Activated CD8-positive, alpha-beta memory T cell treated with anti-CD3 and anti-CD28 coated beads, Interleukin-2, amount 10 ng/mL, durations not matched to agents 7 days and 5 days (primary cell): ENCODE measurements at regions of chr15 and their contacts with region 1.

Region 1: GRCh38 chr15:90482124-90483011 is 47.4 kb upstream of the CRTC3 start:
- DNase-seq: peak; percentile 67
- ATAC-seq: peak; percentile 43
- H3K4me3 Mint-ChIP-seq: no peak overlapping the region
- H3K27ac Mint-ChIP-seq: no peak overlapping the region
- H3K4me1 Mint-ChIP-seq: peaks cover 47% of the 10 kb centered on the region
- H3K27me3 Mint-ChIP-seq: no peaks in the 10 kb centered on the region

Region 2: GRCh38 chr15:90291679-90292356 is 190.6 kb before region 1 on chr15:
- CTCF ChIA-PET with region 1: interaction called, 14 read pairs
- DNase-seq: peak; percentile 55
- ATAC-seq: no peak
- H3K4me3 Mint-ChIP-seq: no peak overlapping the region
- H3K27ac Mint-ChIP-seq: no peak overlapping the region
- H3K4me1 Mint-ChIP-seq: peaks cover 18% of the 10 kb centered on the region
- H3K27me3 Mint-ChIP-seq: peaks cover 10% of the 10 kb centered on the region

Region 3: GRCh38 chr15:90306560-90306959 is 175.8 kb before region 1 on chr15:
- CTCF ChIA-PET with region 1: interaction called, 16 read pairs
- DNase-seq: peak; percentile 74
- ATAC-seq: peak; percentile 96
- H3K4me3 Mint-ChIP-seq: peak overlapping the region; percentile 5
- H3K27ac Mint-ChIP-seq: peak overlapping the region; percentile 54
- H3K4me1 Mint-ChIP-seq: peaks cover 32% of the 10 kb centered on the region
- H3K27me3 Mint-ChIP-seq: peaks cover 9% of the 10 kb centered on the region

Region 4: DNA sequence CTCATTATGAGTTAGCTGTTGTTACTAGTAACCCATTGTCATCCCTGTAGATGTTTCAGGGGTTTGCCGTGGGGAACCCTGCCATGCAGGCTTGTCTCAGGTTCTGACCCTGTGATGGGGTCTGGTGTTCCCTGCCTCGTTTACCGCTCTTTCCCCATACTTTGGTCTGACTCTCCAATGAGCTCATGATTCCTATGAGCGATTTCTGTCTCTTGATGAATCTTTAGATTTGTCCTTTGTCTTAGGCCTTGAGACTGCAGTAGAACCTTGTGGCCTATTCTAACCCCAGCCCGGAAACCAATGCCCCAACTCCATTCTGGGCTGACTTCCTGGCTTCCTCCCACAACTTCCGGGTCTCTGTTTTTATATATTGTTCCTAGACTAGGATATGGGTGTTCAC is 105.6 kb before region 1 on chr15:
- CTCF ChIA-PET with region 1: interaction called, 15 read pairs
- DNase-seq: peak; percentile 93
- ATAC-seq: peak; percentile 92
- H3K4me3 Mint-ChIP-seq: peak overlapping the region; percentile 47
- H3K27ac Mint-ChIP-seq: peak overlapping the region; percentile 94
- H3K4me1 Mint-ChIP-seq: peaks cover 36% of the 10 kb centered on the region
- H3K27me3 Mint-ChIP-seq: no peaks in the 10 kb centered on the region

Region 5: GRCh38 chr15:90501898-90502297 is 19.5 kb after region 1 on chr15:
- CTCF ChIA-PET with region 1: interaction called, 11 read pairs
- DNase-seq: no peak
- ATAC-seq: no peak
- H3K4me3 Mint-ChIP-seq: no peak overlapping the region
- H3K27ac Mint-ChIP-seq: peak overlapping the region; percentile 16
- H3K4me1 Mint-ChIP-seq: peaks cover 2% of the 10 kb centered on the region
- H3K27me3 Mint-ChIP-seq: no peaks in the 10 kb centered on the region

Region 6: DNA sequence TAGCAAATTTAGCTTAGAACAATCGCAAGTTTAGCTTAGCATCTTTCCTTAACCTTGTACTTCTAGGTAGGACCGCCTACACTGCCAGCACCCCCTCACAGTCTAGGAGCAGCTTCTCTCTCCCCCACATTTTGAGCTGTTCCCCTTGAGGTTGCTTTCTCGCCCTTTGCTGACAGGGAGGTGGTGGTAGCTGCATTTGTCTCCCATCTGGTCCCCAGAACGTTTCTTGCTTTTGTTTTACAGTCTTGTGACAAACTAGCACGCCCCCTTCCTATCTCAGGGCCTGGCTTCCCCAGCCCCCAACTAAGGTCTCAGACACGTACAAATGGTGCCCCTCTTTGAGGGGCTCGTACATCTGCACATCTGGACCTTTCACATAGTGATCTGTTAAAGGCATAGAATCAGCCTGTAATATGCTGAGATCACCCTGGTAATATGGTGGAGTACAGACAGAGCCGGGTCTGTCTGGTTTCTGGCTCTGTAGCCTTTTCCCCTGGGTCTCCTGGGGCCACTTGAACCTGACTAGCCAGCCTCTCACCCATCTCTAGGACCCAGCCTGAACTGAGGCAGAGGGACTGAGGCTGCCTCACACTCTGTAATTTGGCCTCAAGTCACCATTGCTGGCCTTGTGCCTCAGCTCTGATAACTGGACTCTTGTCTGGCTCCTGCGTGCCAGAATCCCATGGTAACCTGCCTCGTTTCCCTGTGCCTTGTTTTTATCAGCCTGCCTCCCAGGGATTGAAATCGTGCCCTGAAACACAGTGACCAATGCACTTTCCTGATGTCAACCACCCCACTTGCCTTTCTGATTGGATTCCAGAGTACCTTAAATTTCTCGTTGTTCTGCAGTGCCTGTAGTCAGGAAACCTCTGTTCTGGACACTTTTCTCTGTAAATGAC is 75.1 kb after region 1 on chr15:
- CTCF ChIA-PET with region 1: no interaction called
- DNase-seq: no peak
- ATAC-seq: no peak
- H3K4me3 Mint-ChIP-seq: no peak overlapping the region
- H3K27ac Mint-ChIP-seq: no peak overlapping the region
- H3K4me1 Mint-ChIP-seq: peaks cover 58% of the 10 kb centered on the region
- H3K27me3 Mint-ChIP-seq: no peaks in the 10 kb centered on the region

Region 7: DNA sequence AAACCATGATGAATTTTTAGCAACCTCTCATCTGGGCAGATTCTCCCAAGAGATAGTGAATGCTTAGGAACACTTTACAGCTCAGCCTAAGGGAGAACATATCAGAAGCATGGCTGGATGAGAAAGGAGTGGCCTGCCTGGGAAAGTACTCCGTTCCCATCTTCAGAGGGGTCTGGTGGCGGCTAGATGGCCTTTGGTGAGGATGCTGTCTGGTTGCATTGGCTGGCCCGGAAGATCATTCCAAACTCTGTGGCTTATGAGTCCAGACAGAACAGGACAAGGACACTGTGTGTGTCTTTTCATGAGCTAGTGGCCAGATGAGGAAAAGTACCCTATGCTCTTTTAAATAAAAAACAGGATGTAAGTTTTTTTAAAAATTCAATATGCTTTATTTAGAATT is 98.6 kb after region 1 on chr15:
- CTCF ChIA-PET with region 1: no interaction called
- DNase-seq: no peak
- ATAC-seq: no peak
- H3K4me3 Mint-ChIP-seq: no peak overlapping the region
- H3K27ac Mint-ChIP-seq: peak overlapping the region; percentile 45
- H3K4me1 Mint-ChIP-seq: peaks cover 28% of the 10 kb centered on the region
- H3K27me3 Mint-ChIP-seq: no peaks in the 10 kb centered on the region

Region 8: DNA sequence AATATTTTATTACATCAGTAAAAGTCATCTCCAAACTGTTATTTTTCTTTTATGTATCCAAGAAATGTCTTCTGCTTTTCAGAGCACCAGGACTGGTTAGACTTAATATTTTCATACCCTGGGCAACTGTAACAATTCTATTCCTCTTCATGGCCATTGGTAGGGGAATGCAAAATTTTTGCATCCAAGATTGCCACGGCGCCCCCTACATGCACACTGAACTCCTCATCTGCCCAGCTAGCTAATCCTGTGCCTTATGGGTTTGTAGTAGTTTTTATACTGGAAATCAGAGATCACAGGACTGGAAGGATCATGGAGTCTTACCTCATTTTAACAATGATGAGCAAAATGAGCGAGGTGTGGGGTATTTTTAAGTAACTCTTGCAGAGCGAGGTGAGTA is 121.5 kb after region 1 on chr15:
- CTCF ChIA-PET with region 1: interaction called, 10 read pairs
- DNase-seq: peak; percentile 63
- ATAC-seq: no peak
- H3K4me3 Mint-ChIP-seq: no peak overlapping the region
- H3K27ac Mint-ChIP-seq: peak overlapping the region; percentile 58
- H3K4me1 Mint-ChIP-seq: peaks cover 13% of the 10 kb centered on the region
- H3K27me3 Mint-ChIP-seq: no peaks in the 10 kb centered on the region

Region 9: DNA sequence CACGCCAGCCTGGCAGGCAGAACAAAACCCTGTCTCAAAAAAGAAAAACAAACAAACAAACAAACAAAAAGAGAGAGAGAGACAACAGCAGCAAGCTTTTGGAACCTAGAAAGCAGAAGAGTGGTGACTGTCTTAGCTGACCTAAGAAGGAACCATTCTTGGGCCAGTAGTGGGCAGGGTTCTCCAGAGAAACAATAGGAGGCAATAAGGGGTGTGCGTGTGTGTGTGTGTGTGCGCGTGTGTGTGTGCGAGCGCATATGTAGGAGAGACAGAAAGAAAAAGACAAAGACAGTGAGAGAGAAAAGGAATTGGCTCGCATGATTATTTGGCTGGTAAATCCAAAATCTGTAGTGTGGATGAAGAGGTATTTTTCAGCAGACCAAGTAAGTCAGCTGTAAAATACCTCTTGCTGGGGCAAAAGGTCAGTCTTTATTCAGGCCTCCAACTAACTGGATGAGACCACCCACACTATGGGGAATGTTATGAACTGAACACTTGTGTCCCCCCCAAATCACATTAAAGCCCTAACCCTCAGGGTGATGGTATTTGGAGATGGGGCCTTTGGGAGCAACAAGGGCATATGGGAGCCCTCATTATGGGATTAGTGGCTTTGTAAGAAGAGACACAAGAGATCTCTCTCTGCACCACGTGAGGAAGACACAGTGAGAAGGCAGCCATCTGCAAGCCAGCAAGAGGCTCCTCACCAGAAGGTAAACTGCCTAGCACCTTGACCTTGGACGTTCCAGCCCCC is 219.7 kb after region 1 on chr15:
- CTCF ChIA-PET with region 1: no interaction called
- DNase-seq: no peak
- ATAC-seq: no peak
- H3K4me3 Mint-ChIP-seq: no peak overlapping the region
- H3K27ac Mint-ChIP-seq: no peak overlapping the region
- H3K4me1 Mint-ChIP-seq: peaks cover 12% of the 10 kb centered on the region
- H3K27me3 Mint-ChIP-seq: no peaks in the 10 kb centered on the region